Left cardiac atrium (tissue), 4 donors: ENCODE measurements at regions of chr12 and their contacts with region 1.

Region 1: DNA sequence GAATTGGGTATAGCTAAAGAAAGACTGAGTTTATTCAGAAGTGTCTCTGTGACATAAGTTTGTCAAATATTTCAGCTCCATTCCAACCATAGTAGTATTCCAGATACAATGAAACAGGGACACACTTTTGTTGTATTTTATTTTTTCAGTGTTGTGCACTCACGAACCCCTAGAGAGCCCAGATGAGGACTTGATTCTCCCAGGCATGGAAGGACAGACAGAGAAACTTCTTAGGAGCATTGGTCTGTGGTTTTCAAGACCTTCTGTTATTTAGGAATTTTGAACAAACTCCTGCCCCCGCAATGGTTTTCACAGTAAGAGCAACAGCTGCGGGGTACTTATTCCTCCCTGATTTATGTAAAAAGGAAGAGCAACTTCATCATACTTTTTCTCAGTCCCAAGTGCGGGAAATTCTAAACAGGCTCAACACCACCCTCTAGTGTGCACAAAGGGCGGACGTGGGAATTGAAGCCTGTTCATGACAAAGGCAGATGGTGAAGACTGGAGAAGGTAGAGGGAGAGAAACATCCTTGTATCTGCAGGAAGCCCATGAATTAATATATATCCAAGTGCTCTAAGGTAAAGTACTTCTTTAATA is 147.6 kb downstream of the PAH start:
- DNase-seq: peak; percentile 28
- ATAC-seq: peak; percentile 86 to 87

Region 2: DNA sequence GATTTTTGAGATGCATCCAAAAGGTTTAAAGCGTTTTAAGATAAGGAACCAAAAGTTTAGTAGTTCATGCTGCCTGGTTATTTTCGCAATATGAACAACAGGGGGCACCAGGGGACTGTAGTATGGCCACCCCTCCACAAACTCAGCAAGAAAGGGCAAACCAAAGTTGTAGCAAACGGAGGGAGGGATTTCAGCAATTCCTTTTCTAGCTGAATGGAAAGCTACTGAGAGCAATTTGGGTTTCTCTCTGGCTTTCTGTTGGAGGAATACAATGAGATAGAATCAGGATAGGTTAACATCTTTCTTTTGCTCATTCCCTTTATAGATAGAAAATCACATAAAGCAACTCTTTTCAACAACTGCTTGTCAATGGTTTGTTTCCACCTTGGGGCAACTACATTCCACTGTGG is 829.6 kb before region 1 on chr12:
- intact Hi-C with region 1: loop called in 1 of 2 experiments (anchors 10 kb)
- DNase-seq: peak; percentile 46
- ATAC-seq: peak; percentile 51 to 62

Region 3: GRCh38 chr12:102095675-102096263 is 673.6 kb before region 1 on chr12:
- intact Hi-C with region 1: loop called in 1 of 2 experiments (anchors 10 kb)
- DNase-seq: no peak
- ATAC-seq: no peak